ENCODE measurements at regions of chr5 and their contacts with region 1.

Region 1: GRCh38 chr5:170638454-170639220 is 134.8 kb downstream of the KCNIP1 start:
- DNase-seq: peak; percentile 30
- ATAC-seq: peak; percentile 90
- H3K4me3 ChIP-seq: no peak overlapping the region
- H3K27ac ChIP-seq: no peak overlapping the region
- H3K4me1 ChIP-seq: no peaks in the 10 kb centered on the region
- H3K27me3 ChIP-seq: peaks cover 3% of the 10 kb centered on the region; the same call in 1 of the 2 replicates
- CTCF ChIP-seq: peak; percentile 94

Region 2: DNA sequence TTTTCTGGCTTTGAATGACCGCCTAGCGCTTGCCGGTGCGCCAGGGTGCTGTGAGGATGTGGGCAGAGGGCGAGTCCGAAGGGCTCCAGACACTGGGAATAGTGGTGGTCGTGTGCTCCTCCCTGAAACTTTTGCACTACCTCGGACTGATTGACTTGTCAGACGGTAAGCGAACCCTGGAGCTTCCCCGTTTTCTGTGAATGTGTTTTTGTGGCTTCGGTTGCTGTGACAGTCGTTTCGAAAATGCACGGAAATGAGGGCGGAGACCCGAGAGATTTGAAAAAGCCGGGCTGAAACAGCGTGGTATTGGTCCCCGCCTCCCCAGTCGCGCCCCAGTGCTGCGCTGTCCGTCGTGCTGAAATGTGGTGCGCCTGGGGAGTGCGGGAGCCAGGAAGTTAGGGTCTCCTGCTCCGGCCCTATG is 42.4 kb after region 1 on chr5:
- CTCF ChIA-PET with region 1: no interaction called
- POLR2A ChIA-PET with region 1: no interaction called
- in situ Hi-C with region 1: no loop called
- intact Hi-C with region 1: no loop called
- DNase-seq: no peak
- ATAC-seq: no peak
- H3K4me3 ChIP-seq: no peak overlapping the region
- H3K27ac ChIP-seq: no peak overlapping the region
- H3K4me1 ChIP-seq: no peaks in the 10 kb centered on the region
- H3K27me3 ChIP-seq: peaks cover 42% of the 10 kb centered on the region
- CTCF ChIP-seq: no peak

Region 3: GRCh38 chr5:170791325-170791954 is 152.8 kb after region 1 on chr5:
- CTCF ChIA-PET with region 1: interaction called, 10 read pairs
- POLR2A ChIA-PET with region 1: no interaction called
- in situ Hi-C with region 1: no loop called
- intact Hi-C with region 1: loop called (anchors 2 kb)
- DNase-seq: no peak
- ATAC-seq: peak; percentile 90
- H3K4me3 ChIP-seq: no peak overlapping the region
- H3K27ac ChIP-seq: no peak overlapping the region
- H3K4me1 ChIP-seq: no peaks in the 10 kb centered on the region
- H3K27me3 ChIP-seq: no peaks in the 10 kb centered on the region
- CTCF ChIP-seq: peak; percentile 74

Measured in Panc1 (cell line).